ENCODE measurements at regions of chr2 and their contacts with region 1.

Region 1: DNA sequence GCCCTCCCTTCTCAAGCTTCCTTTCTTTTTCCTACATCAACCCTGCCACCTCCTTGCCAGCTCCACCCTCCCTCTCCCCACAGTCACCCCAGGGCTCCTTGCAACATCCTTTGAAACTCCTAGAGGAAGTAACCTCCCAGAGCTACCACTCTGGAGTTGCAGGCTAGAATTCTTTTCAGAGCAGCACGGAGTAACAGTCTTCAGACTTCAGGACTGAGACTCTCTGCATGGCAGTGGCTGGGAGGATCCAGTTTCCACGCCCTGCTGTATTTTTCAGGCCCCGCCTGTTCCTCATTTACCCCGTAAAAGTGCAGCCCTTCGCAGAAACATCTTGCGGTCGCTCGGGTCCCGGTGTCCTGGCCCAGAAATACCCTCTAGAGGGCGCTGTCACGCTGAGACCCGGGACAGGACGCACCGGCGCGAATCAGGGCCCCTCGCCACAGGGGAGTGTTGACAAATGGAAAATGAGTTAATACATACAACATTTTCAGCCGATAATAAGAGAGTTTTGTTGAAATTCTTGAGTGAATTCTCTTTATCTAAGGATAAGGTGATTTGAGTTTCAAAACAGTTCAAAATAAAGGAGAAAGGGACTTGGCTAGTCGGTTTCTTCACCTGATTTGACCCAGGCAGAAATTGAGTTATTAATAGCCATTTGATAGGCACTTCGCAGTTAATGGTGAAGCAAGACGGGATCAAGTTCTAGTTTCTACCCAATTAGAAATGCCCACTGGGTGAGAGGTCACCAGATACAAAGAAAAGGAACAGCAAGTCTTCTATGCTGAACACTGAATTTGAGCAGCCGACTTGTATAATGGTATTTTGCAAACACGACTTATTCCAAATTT is 18.5 kb upstream of the NTSR2 start:
- DNase-seq: peak; percentile 94
- ATAC-seq: peak; percentile 94
- H3K4me3 Mint-ChIP-seq: peak overlapping the region; percentile 44
- H3K27ac Mint-ChIP-seq: no peak overlapping the region
- H3K4me1 Mint-ChIP-seq: peaks cover 12% of the 10 kb centered on the region
- H3K27me3 Mint-ChIP-seq: peaks cover 10% of the 10 kb centered on the region
- CTCF ChIP-seq: peak; percentile 96

Region 2: GRCh38 chr2:11145350-11145749 is 543.1 kb before region 1 on chr2:
- CTCF ChIA-PET with region 1: no interaction called
- POLR2A ChIA-PET with region 1: no interaction called
- intact Hi-C with region 1: no loop called
- DNase-seq: no peak
- ATAC-seq: no peak
- H3K4me3 Mint-ChIP-seq: no peak overlapping the region
- H3K27ac Mint-ChIP-seq: no peak overlapping the region
- H3K4me1 Mint-ChIP-seq: no peaks in the 10 kb centered on the region
- H3K27me3 Mint-ChIP-seq: no peaks in the 10 kb centered on the region
- CTCF ChIP-seq: no peak

Region 3: DNA sequence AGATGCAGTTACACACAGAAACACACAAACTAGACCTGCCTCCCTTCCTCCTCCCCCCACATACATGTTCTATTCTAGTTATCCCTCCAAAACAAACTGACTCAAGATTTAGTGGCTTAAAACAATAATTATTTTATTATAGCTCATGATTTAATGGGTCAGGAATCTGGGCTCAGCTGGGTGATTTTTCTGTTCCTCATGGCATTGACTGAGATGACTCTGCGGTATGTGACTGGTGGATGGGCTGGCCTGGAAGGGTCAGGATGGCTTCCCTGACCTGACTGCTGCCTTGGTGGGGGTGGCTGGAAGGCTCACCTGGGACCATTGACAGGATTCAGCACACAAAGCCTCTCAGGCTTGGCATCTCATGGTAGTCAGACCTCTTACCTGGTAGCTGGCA is 15.3 kb after region 1 on chr2:
- CTCF ChIA-PET with region 1: interaction called, 11 read pairs
- POLR2A ChIA-PET with region 1: no interaction called
- intact Hi-C with region 1: no loop called
- DNase-seq: no peak
- ATAC-seq: no peak
- H3K4me3 Mint-ChIP-seq: no peak overlapping the region
- H3K27ac Mint-ChIP-seq: no peak overlapping the region
- H3K4me1 Mint-ChIP-seq: no peaks in the 10 kb centered on the region
- H3K27me3 Mint-ChIP-seq: no peaks in the 10 kb centered on the region
- CTCF ChIP-seq: no peak

Region 4: DNA sequence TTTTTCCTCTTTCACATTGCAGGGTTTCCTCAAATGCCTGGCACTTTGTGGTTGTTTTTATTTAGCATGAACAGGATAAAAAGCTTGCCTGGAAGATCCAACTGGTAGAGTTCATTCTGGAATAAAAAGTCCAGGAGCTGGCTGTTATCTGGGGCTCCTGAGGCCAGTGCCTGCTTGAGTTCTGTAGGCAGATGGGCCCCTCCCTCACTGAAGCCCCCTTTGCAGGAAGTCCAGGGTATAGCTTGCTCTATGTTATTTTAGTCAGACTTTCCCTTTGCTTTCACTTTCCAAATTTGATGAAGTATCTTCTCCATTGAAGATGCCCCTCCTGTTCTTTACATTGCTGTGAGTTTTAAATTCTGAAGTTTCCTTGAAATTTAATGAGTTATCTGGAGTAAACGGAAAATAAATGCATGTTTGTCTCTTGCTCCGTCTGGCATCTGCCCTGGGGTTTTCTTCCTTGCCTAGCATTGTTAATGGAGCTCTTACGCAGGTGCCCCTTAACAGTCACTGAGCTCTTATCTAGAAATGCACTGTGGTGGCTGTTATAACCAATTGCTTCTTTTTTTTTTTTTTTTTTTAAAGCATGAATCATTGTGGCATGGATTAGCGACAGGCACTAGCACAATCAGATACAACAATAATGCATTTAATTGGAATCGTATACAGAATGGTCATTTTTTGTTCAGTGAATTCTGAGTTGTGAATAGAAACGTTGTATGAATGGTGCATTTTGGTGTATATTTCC is 31.0 kb after region 1 on chr2:
- CTCF ChIA-PET with region 1: interaction called, 10 read pairs
- POLR2A ChIA-PET with region 1: no interaction called
- intact Hi-C with region 1: no loop called
- DNase-seq: no peak
- ATAC-seq: peak; percentile 77
- H3K4me3 Mint-ChIP-seq: peak overlapping the region; percentile 62
- H3K27ac Mint-ChIP-seq: peak overlapping the region; percentile 47
- H3K4me1 Mint-ChIP-seq: peaks cover 8% of the 10 kb centered on the region
- H3K27me3 Mint-ChIP-seq: peaks cover 6% of the 10 kb centered on the region
- CTCF ChIP-seq: no peak

Region 5: DNA sequence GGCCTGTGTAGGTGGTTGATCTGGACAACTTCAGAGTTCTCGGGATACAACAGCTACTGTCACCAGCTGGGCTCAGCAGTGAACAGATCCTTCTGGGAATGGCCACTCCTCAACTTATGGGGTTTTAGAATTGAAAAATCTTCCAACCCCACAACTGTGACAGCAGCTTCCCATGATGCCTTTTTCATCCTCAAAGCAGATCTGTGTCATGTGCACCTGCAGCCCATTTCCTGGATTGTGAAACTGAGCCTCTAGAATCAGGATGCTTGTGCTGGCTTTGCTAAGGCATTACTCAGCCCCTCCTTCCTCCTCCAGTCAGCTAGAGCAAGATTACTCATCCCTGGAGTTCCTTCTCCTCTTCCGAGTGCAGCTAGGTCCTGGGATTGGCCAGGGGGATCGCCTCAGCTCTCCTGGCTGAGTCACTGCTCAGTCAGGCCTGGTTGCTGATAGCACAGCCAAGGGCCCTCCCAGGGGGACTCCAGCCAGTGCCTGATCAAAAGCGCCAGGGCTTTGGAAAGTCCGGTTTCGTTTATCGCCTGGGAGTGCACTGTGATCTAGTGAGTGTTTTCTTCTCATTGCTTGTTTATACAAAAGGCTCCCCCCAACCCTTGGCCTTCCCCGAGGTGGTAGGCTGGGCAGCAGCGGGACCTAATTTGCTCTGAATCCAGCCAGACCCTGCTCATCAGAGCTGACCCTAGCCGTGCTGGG is 55.6 kb after region 1 on chr2:
- CTCF ChIA-PET with region 1: interaction called, 16 read pairs
- POLR2A ChIA-PET with region 1: no interaction called
- intact Hi-C with region 1: loop called (anchors 10 kb)
- DNase-seq: peak; percentile 83
- ATAC-seq: peak; percentile 62
- H3K4me3 Mint-ChIP-seq: peak overlapping the region; percentile 22
- H3K27ac Mint-ChIP-seq: peak overlapping the region; percentile 72
- H3K4me1 Mint-ChIP-seq: peaks cover 45% of the 10 kb centered on the region
- H3K27me3 Mint-ChIP-seq: no peaks in the 10 kb centered on the region
- CTCF ChIP-seq: no peak

Region 6: DNA sequence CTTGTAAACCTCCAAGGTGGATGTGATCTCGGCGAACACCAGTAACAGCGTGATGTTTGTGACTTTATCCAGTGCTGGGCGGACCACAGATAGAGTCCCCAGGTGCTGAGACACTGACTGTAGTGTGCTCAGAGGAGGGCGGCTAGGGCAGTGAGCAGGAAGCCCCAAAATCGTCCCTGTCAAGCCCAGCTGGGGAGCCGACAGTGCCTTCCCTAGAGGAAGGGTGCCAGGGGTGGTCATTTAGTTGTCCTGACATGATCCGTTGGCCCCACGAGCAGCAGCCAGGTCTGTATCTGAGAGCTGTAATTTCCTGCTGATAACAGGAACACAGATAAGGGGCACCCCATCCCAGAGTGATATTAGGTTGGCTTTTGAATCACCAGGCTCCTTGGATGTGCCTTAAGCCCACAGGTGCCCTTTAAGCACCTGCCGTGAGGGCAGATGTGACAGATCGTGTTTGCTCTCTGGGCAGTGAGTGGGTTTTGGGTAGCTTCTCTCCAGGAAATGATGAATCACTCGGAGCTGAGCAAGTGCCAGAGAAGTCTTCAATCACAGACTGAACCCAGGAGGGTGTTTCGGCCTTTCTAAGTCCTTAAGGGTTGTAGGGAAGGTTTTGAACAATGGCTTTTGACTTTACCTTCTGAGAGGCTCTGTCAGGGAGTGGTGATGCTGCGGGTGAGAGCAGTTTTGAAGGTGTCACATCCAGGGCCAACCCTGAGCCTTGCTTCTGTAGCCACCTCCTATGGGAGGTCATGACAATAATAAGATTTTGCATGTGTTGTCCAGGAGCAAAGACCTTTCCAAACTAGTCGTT is 65.6 kb after region 1 on chr2:
- CTCF ChIA-PET with region 1: interaction called, 11 read pairs
- POLR2A ChIA-PET with region 1: interaction called, 4 read pairs
- intact Hi-C with region 1: loop called (anchors 10 kb)
- DNase-seq: peak; percentile 89
- ATAC-seq: peak; percentile 73
- H3K4me3 Mint-ChIP-seq: peak overlapping the region; percentile 76
- H3K27ac Mint-ChIP-seq: peak overlapping the region; percentile 97
- H3K4me1 Mint-ChIP-seq: peaks cover 88% of the 10 kb centered on the region
- H3K27me3 Mint-ChIP-seq: no peaks in the 10 kb centered on the region
- CTCF ChIP-seq: no peak

Region 7: GRCh38 chr2:11778923-11779757 is 90.7 kb after region 1 on chr2:
- CTCF ChIA-PET with region 1: interaction called, 541 read pairs
- POLR2A ChIA-PET with region 1: interaction called, 3 read pairs
- intact Hi-C with region 1: loop called (anchors 1 kb)
- DNase-seq: peak; percentile 91
- ATAC-seq: peak; percentile 94
- H3K4me3 Mint-ChIP-seq: peak overlapping the region; percentile 42
- H3K27ac Mint-ChIP-seq: peak overlapping the region; percentile 56
- H3K4me1 Mint-ChIP-seq: peaks cover 42% of the 10 kb centered on the region
- H3K27me3 Mint-ChIP-seq: no peaks in the 10 kb centered on the region
- CTCF ChIP-seq: peak; percentile 95

Measured in activated CD8-positive, alpha-beta T cell treated with anti-CD3 and anti-CD28 coated beads for 36 hours (primary cell).